ENCODE measurements at regions of chr20 and their contacts with region 1.

Region 1: DNA sequence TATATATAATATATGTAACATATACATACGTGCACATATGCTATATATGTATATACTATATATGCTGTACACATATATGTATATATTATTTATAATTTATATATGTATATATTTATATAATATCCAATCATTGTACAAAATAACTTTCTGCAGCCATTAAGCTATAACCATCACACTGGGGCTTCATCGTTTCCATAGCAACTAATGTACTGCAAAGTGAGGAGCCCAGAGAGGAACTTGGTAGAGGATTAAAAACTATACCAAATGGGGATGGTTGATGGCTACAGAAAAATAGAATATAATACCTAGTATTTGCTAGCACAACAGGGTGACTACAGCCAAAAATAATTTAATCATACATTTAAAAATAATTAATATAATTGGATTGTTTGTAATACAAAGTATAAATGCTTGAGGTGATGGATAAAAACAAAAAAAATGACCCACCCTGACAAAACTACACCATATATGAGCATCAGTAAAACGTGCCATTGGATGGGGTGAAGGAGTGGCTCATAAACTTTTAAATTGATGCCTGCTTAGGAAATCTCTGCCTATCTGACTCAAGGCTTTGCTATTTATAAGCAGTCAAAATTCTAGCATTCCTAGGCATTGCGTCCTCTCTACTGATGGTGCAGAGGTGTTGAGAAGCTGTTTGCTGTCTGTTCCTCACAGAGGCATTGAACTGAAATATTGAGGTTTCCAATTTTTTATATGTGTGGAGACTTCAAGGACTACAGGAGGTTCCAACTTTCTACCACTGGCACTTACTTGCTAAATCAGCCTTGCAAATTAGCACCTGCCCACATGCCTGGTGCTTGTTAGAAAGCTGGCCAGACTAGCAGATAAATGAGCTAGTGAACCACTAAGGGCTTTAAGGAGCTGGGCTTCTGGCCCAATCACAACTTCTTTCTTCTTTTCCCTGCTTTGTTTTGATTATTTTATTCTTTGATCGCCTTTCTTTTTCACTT is 190.1 kb downstream of the SCP2D1 start:
- DNase-seq: no peak
- ATAC-seq: no peak
- H3K4me3 ChIP-seq: no peak overlapping the region
- H3K27ac ChIP-seq: no peak overlapping the region
- H3K4me1 ChIP-seq: no peaks in the 10 kb centered on the region
- H3K27me3 ChIP-seq: no peaks in the 10 kb centered on the region
- CTCF ChIP-seq: no peak
- POLR2A ChIP-seq: no peak

Region 2: DNA sequence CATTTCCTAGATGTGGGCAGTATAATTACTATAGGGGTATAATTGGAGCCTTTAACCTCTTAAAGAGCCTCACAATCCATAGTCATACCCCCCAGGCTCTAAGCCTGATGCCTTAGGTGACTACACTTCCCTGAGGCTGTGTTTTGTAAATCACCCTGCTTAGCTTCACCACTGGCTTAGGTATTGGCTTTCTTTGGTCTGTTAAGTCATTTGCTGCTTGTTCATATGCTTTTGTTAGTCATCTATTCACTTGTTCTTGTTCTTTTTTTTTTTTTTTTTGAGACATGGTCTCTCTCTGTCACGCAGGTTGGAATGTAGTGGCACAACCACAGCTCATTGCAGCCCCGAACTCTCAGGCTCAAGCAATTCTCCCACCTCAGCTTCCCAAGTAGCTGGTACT is 839.3 kb before region 1 on chr20:
- intact Hi-C with region 1: no loop called
- DNase-seq: no peak
- ATAC-seq: no peak
- H3K4me3 ChIP-seq: no peak overlapping the region
- H3K27ac ChIP-seq: no peak overlapping the region
- H3K4me1 ChIP-seq: peaks cover 0 to 5% (median 0%) of the 10 kb centered on the region in 12 donors
- H3K27me3 ChIP-seq: no peaks in the 10 kb centered on the region
- CTCF ChIP-seq: no peak
- POLR2A ChIP-seq: no peak

Region 3: GRCh38 chr20:18943542-18943941 is 60.1 kb before region 1 on chr20:
- intact Hi-C with region 1: loop called in 1 of 10 experiments (anchors 10 kb)
- DNase-seq: no peak
- ATAC-seq: no peak
- H3K4me3 ChIP-seq: no peak overlapping the region
- H3K27ac ChIP-seq: no peak overlapping the region
- H3K4me1 ChIP-seq: no peaks in the 10 kb centered on the region
- H3K27me3 ChIP-seq: no peaks in the 10 kb centered on the region
- CTCF ChIP-seq: no peak
- POLR2A ChIP-seq: no peak

Region 4: GRCh38 chr20:19095762-19096161 is 92.1 kb after region 1 on chr20:
- intact Hi-C with region 1: loop called in 1 of 10 experiments (anchors 10 kb)
- DNase-seq: no peak
- ATAC-seq: no peak
- H3K4me3 ChIP-seq: no peak overlapping the region
- H3K27ac ChIP-seq: no peak overlapping the region
- H3K4me1 ChIP-seq: peaks cover 0 to 6% (median 0%) of the 10 kb centered on the region in 12 donors
- H3K27me3 ChIP-seq: no peaks in the 10 kb centered on the region
- CTCF ChIP-seq: no peak
- POLR2A ChIP-seq: no peak

Measured in heart left ventricle (tissue), 16 donors.